ENCODE measurements at regions of chr1 and their contacts with region 1.

Region 1: GRCh38 chr1:2227346-2228153 is 569 bp upstream of the SKI start:
- DNase-seq: peak; percentile 98
- ATAC-seq: peak; percentile 93
- H3K4me3 Mint-ChIP-seq: peak overlapping the region; percentile 76
- H3K27ac Mint-ChIP-seq: peak overlapping the region; percentile 56
- H3K4me1 Mint-ChIP-seq: peaks cover 37% of the 10 kb centered on the region
- H3K27me3 Mint-ChIP-seq: no peaks in the 10 kb centered on the region
- CTCF ChIP-seq: no peak

Region 2: DNA sequence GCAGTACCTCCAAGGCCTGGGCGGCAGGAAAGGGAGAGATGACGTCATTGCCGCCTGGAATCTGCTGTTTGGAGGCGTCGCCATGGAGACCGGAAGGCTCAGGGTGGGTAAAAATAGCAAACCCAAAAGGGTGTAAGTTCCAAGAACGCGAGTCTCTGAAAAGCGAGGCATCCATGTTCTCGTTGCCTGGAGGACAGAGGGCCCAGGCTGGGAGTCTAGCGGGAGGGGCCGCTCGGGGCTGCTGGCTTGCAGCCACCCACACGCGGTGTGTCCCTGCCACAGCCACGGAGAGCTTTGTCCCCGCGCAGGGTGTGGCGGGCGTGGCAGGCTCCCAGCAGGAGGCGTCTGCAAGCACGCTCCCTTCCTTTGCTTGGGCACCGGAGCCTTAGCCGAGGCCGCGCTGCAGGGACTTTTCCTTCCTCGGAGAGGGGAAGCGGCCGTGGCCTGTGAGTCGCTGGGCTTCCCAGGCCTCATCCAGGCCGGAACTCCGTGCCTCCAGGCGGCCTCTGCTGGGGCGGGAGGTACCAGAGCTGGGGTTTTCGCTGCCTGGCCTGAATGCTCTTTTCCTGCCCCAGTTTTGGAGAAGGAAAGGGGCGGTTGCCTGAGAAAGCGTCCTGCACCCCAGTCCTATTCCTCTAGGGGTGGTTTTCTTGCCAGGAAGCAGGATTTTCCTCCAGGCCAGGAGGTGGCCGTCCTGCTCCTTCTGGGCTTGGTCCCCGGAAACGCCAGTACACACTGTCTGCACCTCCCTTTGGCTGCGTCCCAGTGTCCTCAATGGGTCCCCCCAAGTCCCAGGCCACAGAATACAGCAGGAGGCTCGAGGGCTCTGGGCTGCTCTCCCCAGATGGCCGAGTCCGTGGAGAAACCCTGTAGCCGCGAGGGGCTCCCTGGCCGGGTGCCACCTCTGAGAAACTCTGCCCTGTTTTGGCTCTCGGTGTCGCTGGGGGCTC is 14.7 kb before region 1 on chr1:
- CTCF ChIA-PET with region 1: no interaction called
- POLR2A ChIA-PET with region 1: interaction called, 46 read pairs
- intact Hi-C with region 1: loop called (anchors 2 kb)
- DNase-seq: peak; percentile 51
- ATAC-seq: peak; percentile 69
- H3K4me3 Mint-ChIP-seq: peak overlapping the region; percentile 32
- H3K27ac Mint-ChIP-seq: no peak overlapping the region
- H3K4me1 Mint-ChIP-seq: peaks cover 5% of the 10 kb centered on the region
- H3K27me3 Mint-ChIP-seq: no peaks in the 10 kb centered on the region
- CTCF ChIP-seq: no peak

Region 3: DNA sequence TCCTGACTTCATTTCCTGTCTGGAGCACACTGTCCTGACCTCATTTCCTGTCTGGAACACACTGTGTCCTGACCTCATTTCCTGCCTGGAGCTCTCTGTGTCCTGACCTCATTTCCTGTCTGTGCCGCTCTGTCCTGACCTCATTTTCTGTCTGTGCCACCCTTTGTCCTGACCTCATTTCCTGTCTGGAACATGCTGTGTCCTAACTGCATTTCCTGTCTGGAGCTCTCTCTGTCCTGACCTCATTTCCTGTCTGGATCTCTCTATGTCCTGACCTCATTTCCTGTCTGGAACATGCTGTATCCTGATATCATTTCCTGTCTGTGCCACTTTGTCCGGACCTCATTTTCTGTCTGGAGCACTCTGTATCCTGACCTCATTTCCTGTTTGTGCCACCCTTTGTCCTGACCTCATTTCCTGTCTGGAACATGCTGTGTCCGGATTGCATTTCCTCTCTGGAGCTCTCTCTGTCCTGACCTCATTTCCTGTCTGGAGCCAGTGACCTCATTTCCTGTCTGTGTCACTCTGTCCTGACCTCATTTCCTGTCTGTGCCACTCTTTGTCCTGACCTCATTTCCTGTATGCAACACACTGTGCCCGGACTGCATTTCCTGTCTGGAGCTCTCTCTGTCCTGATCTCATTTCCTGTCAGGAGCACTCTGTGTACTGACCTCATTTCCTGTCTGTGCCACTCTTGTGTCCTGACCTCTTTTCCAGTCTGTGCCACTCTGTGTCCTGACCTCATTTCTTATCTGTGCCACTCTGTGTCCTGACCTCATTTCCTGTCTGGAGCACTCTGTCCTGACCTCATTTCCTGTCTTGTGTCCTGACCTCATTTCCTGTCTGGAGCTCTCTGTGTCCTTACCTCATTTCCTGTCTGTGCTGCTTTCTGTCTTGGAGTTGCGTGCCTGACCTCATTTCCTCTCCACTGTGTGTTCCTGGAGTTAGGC is 28.1 kb after region 1 on chr1:
- CTCF ChIA-PET with region 1: no interaction called
- POLR2A ChIA-PET with region 1: interaction called, 14 read pairs
- intact Hi-C with region 1: no loop called
- DNase-seq: peak; percentile 45
- ATAC-seq: peak; percentile 58
- H3K4me3 Mint-ChIP-seq: no peak overlapping the region
- H3K27ac Mint-ChIP-seq: no peak overlapping the region
- H3K4me1 Mint-ChIP-seq: peaks cover 60% of the 10 kb centered on the region
- H3K27me3 Mint-ChIP-seq: no peaks in the 10 kb centered on the region
- CTCF ChIP-seq: no peak

Region 4: DNA sequence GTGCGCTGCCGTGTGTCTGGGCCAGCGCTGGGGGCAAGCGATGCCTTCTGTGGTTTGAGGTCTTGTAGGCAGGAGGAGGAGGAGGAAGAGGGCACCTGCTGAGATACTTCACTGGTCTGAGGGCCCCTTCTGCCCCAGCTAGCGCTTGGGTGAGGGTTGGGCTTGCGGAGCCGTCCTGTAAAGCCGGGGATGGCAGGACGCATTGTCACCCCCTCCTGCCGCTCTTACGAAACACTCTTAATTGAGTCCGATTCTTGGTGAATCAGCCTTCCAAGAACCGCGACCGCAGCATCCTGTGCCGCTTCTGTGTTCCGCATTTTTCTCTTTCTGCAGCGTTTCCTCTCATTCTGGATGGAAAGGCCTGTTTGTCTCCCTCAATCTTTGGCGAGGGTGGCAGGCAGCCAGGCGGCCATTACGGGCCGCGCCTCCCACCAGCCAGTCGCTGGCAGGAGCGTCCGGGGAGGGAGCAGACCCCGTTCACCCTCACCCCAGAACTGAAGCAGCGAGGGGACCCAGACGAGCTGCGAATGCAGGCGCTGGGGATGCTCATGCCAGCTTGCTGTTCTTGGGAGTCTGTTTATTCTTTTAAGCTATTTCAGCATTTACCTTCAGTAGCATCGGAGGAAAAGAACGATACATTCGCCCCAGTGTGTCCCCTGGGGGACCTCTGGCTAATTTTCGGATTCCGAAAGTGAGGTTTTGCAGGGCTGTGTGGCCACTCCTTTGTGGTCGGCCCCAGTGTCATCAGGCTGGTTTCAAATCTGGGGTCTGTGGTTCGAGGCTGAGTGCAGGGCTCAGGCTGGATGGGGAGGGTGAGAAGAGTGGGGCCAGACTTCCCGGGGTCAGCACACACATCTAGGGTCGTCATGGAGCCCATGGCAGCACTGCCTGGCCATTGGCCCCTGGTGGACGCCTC is 63.3 kb after region 1 on chr1:
- CTCF ChIA-PET with region 1: interaction called, 3 read pairs
- POLR2A ChIA-PET with region 1: interaction called, 19 read pairs
- intact Hi-C with region 1: no loop called
- DNase-seq: peak; percentile 62
- ATAC-seq: peak; percentile 77
- H3K4me3 Mint-ChIP-seq: peak overlapping the region; percentile 79
- H3K27ac Mint-ChIP-seq: peak overlapping the region; percentile 71
- H3K4me1 Mint-ChIP-seq: peaks cover 78% of the 10 kb centered on the region
- H3K27me3 Mint-ChIP-seq: no peaks in the 10 kb centered on the region
- CTCF ChIP-seq: no peak

Region 5: GRCh38 chr1:2314803-2315673 is 87.5 kb after region 1 on chr1:
- CTCF ChIA-PET with region 1: interaction called, 5 read pairs
- POLR2A ChIA-PET with region 1: interaction called, 18 read pairs
- intact Hi-C with region 1: loop called (anchors 1 kb)
- DNase-seq: peak; percentile 78
- ATAC-seq: peak; percentile 58
- H3K4me3 Mint-ChIP-seq: peak overlapping the region; percentile 66
- H3K27ac Mint-ChIP-seq: peak overlapping the region; percentile 18
- H3K4me1 Mint-ChIP-seq: peaks cover 37% of the 10 kb centered on the region
- H3K27me3 Mint-ChIP-seq: no peaks in the 10 kb centered on the region
- CTCF ChIP-seq: peak; percentile 83

Region 6: GRCh38 chr1:2381741-2382620 is 154.4 kb after region 1 on chr1:
- CTCF ChIA-PET with region 1: interaction called, 5 read pairs
- POLR2A ChIA-PET with region 1: interaction called, 14 read pairs
- intact Hi-C with region 1: no loop called
- DNase-seq: peak; percentile 74
- ATAC-seq: peak; percentile 85
- H3K4me3 Mint-ChIP-seq: no peak overlapping the region
- H3K27ac Mint-ChIP-seq: no peak overlapping the region
- H3K4me1 Mint-ChIP-seq: peaks cover 25% of the 10 kb centered on the region
- H3K27me3 Mint-ChIP-seq: no peaks in the 10 kb centered on the region
- CTCF ChIP-seq: peak; percentile 31

Measured in activated B cell treated with CpG ODN at 0.5 μM for 24 hours (primary cell).